ENCODE measurements at regions of chr16 and their contacts with region 1.

Region 1: DNA sequence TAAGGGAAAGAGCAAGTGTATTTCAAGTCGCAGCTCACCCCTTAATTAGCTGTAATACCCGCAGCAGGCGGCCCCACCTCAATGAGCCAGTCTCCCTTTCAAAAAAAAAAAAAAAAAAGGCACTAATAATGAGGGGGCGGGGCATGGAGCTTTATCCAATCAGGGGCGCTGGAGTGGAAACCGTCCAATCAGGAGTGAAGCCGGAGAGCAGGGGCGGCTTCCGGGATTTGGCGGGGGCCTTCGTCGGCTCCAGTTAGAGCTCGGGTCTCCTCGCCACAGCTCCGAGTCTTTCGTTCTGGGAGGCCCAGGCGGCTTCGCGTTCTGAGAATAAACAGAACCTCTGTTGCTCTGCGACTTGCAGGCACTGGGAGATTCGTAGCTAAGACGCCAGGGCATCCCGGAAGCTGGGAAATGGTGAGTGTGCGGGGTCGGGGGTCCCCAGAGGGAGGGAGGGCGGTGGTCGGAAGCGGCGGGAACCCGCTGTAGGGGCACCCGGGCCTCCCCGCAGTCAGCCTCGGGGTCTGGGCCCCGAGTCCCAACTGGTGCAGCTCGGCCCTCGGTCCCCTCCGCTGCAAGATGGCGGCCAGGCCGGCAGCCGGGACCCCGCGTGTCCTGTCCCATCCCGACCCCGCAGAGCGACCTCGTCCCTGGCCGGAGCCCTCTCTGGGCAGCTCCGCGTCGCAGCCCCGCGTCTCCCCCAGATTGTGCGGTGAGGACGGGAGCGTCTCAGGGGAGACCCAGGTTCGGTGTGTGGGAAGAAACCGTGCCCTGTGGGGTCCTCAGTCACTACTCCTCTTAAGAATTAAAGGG is at the start of gene ZNF267:
- DNase-seq: peak; percentile 95 to 97 (median 96)
- ATAC-seq: peak; percentile 91 to 97 (median 94)
- H3K4me3 ChIP-seq: peak within 1 kb of the TSS; percentile 72 to 100 (median 94)
- H3K27ac ChIP-seq: peak within 1 kb of the TSS; percentile 24 to 98 (median 86)
- H3K4me1 ChIP-seq: peaks cover 3 to 74% (median 29%) of the 10 kb centered on the region in 12 donors
- H3K27me3 ChIP-seq: no peaks in the 10 kb centered on the region
- CTCF ChIP-seq: no peak
- POLR2A ChIP-seq: peak in 1 of 2 donors; percentile 71
- total RNA-seq, gene ZNF267: 3.1 to 22.6 (median 5.3) TPM

Region 2: DNA sequence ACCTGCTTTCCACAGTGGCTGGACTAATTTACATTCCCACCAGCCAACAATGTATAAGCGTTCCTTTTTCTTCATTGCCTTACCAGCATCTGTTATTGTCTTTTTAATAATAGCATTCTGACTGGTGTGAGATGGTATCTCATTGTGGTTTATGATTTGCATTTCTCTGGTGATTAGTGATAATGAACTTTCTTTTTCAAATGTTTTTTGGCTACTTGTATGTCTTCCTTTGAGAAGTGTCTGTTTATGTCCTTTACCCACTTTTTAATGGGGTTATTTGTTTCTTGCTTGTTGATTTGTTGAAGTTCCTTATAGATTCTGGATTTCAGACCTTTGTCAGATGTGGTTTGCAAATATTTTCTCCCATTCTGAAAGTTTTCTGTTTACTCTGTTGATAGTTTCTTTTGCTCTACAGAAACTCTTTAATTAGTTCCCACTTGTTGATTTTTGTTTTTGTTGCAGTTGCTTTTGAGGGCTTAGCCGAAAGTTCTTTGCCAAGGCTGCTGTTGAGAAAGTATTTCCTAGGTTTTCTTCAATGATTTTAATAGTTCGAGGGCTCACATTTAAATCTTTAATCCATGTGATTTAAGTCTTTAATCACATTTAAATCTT is 587.2 kb before region 1 on chr16:
- intact Hi-C with region 1: no loop called
- DNase-seq: no peak
- ATAC-seq: no peak
- H3K4me3 ChIP-seq: no peak overlapping the region
- H3K27ac ChIP-seq: no peak overlapping the region
- H3K4me1 ChIP-seq: no peaks in the 10 kb centered on the region
- H3K27me3 ChIP-seq: peaks cover 0 to 15% (median 0%) of the 10 kb centered on the region in 9 donors
- CTCF ChIP-seq: no peak
- POLR2A ChIP-seq: no peak

Region 3: DNA sequence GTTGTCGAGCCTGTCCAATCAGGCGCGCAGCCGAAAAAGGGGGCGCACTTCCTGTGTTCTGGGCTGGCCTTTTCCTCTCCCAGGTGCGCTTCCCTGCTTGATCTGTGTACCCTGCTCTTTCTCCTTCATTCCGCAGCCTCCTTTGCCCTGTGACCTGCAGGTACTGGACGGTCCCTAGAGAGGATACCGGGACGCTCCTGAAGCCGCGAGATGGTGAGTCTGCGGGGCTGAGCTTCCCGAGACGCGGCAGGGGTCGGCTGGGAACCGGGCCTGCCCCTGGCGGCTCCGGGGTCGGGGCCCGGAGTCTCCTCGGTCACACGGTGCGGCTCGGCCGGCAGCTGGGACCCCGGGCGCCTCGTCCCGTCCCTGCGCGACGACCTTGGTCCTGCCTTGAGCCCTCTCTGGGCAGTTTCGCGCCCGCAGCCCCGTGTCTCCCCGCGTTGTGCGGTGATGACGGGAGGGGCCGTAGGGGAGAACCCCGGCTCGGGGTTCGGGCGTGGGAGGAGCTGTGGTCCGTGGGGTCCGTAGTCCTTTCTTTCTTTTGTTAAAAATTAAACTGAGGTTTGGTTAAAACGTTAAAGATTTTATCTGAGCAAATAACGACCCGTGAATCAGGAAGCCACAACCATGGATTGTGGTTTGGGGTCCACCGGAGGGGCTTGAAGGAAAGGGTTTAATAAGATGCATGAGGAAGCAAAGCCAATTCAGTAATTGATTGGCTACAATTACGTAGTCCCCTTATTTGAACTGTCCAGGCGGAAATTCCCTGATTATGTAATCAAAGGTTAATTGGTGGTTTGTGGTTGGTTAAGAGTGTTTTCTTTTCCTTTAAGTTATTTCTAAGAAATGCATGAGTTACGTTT is 173.0 kb before region 1 on chr16:
- intact Hi-C with region 1: loop called in 1 of 10 experiments (anchors 10 kb)
- DNase-seq: peak; percentile 78 to 90 (median 84)
- ATAC-seq: peak; percentile 94 to 99 (median 95)
- H3K4me3 ChIP-seq: peak overlapping the region; percentile 54 to 93 (median 75)
- H3K27ac ChIP-seq: peak overlapping the region in 7 of 12 donors; percentile 1 to 72 (median 57)
- H3K4me1 ChIP-seq: peaks cover 0 to 21% (median 8%) of the 10 kb centered on the region in 12 donors
- H3K27me3 ChIP-seq: peaks cover 0 to 5% (median 0%) of the 10 kb centered on the region in 9 donors
- CTCF ChIP-seq: peak in 6 of 12 donors; percentile 7 to 40 (median 20)
- POLR2A ChIP-seq: peak in 1 of 2 donors; percentile 12

Region 4: DNA sequence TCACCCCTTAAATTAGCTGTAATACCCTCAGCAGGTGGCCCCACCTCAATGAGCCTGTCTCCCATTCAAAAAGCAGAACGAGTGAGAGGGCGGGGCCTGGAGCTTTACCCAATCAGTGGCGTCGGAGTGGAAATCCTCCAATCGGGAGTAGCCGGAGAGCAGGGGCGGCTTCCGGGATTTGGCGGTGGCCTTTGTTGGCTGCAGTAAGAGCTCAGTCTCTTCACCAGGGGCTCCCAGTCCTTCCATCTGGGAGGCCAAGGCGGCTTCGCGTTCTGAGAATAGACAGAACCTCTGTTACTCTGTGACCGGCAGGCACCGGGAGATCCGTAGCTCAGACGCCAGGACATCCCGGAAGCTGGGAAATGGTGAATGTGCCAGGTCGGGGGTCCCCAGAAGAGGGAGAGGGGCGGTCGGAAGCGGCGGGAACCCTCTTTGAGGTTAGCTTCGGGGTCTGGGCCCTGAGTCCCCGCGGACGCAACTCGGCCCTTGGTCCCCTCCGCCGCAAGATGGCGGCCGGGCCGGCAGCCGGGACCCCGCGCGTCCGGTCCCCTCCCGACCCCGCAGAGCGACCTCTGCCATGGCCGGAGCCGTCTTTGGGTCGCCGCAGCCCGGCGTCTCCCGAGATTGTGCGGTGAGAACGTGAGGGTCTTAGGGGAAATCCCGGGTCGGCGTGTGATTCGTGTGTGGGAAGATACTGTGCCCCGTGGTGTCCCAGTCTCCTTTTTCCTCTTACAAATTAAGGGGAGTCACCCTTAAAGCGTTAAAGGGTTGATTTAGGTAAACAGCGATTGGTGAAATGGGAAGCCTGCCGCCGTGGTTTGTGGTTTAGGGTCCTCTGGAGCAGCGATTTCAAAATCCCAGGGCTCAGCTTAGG is 160.5 kb before region 1 on chr16:
- intact Hi-C with region 1: loop called in 7 of 10 experiments (anchors 5 to 10 kb)
- DNase-seq: peak; percentile 93 to 96 (median 94)
- ATAC-seq: peak; percentile 94 to 98 (median 96)
- H3K4me3 ChIP-seq: peak overlapping the region; percentile 75 to 100 (median 88)
- H3K27ac ChIP-seq: peak overlapping the region; percentile 82 to 99 (median 96)
- H3K4me1 ChIP-seq: peaks cover 0 to 26% (median 15%) of the 10 kb centered on the region in 12 donors
- H3K27me3 ChIP-seq: no peaks in the 10 kb centered on the region
- CTCF ChIP-seq: peak in 1 of 12 donors; percentile 7
- POLR2A ChIP-seq: peak; percentile 75 to 93

Region 5: DNA sequence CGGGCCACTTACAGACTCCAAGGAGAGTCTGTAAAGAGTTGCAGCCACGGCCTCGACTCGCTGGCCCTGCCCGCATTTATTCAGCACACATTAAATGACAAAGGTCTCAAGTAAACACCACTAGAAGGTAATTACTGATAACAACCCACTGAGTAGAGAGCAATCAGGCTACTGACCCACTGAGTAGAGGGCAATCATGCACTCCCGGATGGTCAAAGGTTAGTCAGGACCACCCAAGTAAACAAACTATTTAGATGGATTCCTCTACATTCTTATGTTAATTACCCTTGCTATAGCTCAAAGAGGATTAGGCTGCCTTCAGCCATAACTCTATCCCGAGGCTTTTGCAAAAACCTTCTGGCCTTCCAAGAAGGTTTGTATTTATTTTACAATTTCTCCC is 30.9 kb before region 1 on chr16:
- intact Hi-C with region 1: no loop called
- DNase-seq: no peak
- ATAC-seq: no peak
- H3K4me3 ChIP-seq: no peak overlapping the region
- H3K27ac ChIP-seq: no peak overlapping the region
- H3K4me1 ChIP-seq: no peaks in the 10 kb centered on the region
- H3K27me3 ChIP-seq: no peaks in the 10 kb centered on the region
- CTCF ChIP-seq: no peak
- POLR2A ChIP-seq: no peak

Measured in heart left ventricle (tissue), 16 donors.